HepG2 (cell line): ENCODE measurements at regions of chr17 and their contacts with region 1.

Region 1: GRCh38 chr17:45218895-45219661 is 2.6 kb upstream of the FMNL1 start:
- DNase-seq: peak; percentile 76
- ATAC-seq: peak; percentile 79
- H3K4me3 ChIP-seq: no peak overlapping the region
- H3K27ac ChIP-seq: no peak overlapping the region
- H3K4me1 ChIP-seq: peaks cover 6% of the 10 kb centered on the region; the same call in 1 of the 2 replicates
- H3K27me3 ChIP-seq: peaks cover 17 to 44% of the 10 kb centered on the region in 2 experiments; a peak in 4 of 5 replicates
- CTCF ChIP-seq: peak; percentile 98
- EP300 ChIP-seq: no peak
- POLR2A ChIP-seq: no peak
- RAD21 ChIP-seq: peak; percentile 94

Region 2: DNA sequence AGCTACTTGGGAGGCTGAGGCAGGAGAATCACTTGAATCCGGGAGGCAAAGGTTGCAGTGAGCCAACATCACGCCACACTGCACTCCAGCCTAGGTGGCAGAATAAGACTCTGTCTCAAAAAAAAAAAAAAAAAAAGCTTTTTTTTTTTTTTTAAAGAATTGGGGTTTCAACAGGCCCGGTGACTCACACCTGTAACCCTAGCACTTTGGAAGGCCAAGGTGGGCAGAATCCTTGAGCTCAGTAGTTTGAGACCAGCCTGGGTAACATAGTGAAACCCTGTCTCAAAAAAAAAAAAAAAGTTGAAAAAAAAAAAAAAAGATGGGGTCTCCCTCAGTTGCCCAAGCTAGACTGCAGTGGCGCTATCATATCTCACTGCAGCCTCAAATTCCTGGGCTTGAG is 64.0 kb before region 1 on chr17:
- CTCF ChIA-PET with region 1: no interaction called
- POLR2A ChIA-PET with region 1: no interaction called
- in situ Hi-C with region 1: no loop called
- intact Hi-C with region 1: no loop called
- DNase-seq: no peak
- ATAC-seq: no peak
- H3K4me3 ChIP-seq: no peak overlapping the region
- H3K27ac ChIP-seq: no peak overlapping the region
- H3K4me1 ChIP-seq: peaks cover 39% of the 10 kb centered on the region
- H3K27me3 ChIP-seq: no peaks in the 10 kb centered on the region
- CTCF ChIP-seq: no peak
- EP300 ChIP-seq: no peak
- POLR2A ChIP-seq: no peak
- RAD21 ChIP-seq: no peak

Region 3: GRCh38 chr17:45197555-45198334 is 21.3 kb before region 1 on chr17:
- CTCF ChIA-PET with region 1: interaction called, 6 read pairs
- POLR2A ChIA-PET with region 1: interaction called, 3 read pairs
- in situ Hi-C with region 1: no loop called
- intact Hi-C with region 1: loop called (anchors 2 kb)
- DNase-seq: peak; percentile 92
- ATAC-seq: peak; percentile 91
- H3K4me3 ChIP-seq: peak overlapping the region; percentile 33 to 63 (median 41); a peak in 5 of 6 replicates
- H3K27ac ChIP-seq: peak overlapping the region; percentile 39
- H3K4me1 ChIP-seq: peaks cover 71% of the 10 kb centered on the region
- H3K27me3 ChIP-seq: no peaks in the 10 kb centered on the region
- CTCF ChIP-seq: peak; percentile 100
- EP300 ChIP-seq: peak; percentile 7 to 69; a peak in 2 of 4 replicates
- POLR2A ChIP-seq: no peak
- RAD21 ChIP-seq: peak; percentile 100

Region 4: GRCh38 chr17:45235416-45236281 is 16.6 kb after region 1 on chr17:
- CTCF ChIA-PET with region 1: interaction called, 63 read pairs
- POLR2A ChIA-PET with region 1: interaction called, 20 read pairs
- in situ Hi-C with region 1: no loop called
- intact Hi-C with region 1: loop called (anchors 1 kb)
- DNase-seq: peak; percentile 58
- ATAC-seq: peak; percentile 13
- H3K4me3 ChIP-seq: no peak overlapping the region
- H3K27ac ChIP-seq: no peak overlapping the region
- H3K4me1 ChIP-seq: peaks cover 14% of the 10 kb centered on the region
- H3K27me3 ChIP-seq: peaks cover 4 to 30% of the 10 kb centered on the region in 2 experiments
- CTCF ChIP-seq: peak; percentile 85
- EP300 ChIP-seq: no peak
- POLR2A ChIP-seq: no peak
- RAD21 ChIP-seq: no peak